ENCODE measurements at regions of chr6 and their contacts with region 1.

Region 1: DNA sequence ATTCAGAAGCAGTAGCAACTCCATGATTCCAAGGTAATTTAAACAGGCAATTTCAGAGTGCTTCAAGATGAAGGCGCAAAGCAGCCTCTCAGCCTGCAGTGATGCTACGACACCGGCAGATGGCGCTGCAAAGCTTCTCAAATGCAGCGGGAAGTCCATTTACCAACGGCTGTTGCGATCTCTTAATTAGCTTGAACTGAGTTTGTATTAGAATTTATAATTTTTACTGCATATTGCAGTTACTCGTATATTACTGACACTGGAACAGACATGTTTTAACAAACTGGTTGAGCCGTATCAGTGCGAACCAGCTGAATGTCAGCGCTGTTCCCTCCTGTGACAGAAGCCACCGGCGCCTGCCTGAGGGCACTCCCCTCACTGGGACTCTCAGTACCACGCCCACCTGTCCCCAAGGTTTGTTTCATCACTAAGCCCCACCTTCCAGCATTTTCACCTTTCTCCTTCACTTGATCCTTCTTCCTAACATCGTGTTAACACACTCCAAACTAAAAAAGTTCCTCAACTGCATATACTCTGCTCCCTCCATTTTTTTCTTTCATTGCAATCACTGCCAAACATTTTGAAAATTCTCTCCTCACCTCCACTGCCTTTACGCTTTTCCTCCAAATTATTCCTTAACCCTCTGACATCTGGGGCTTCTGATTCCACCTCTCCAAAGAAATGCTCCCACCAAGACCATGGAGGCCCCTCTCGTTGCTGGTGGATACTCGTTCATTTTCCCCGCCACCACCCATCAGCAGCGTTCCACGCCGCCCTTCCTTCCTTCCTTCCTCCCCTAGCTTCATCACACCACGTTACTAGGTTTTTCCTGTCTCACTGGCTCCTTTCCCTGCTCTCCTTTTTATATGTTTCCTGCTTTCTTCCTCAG is 14.5 kb downstream of the GNL1 start:
- DNase-seq: peak; percentile 81 to 83 (median 82)
- H3K4me3 ChIP-seq: peak overlapping the region; percentile 39 to 60
- H3K4me3 Mint-ChIP-seq: peak overlapping the region; percentile 84 to 94 (median 90)
- H3K27ac ChIP-seq: peak overlapping the region; percentile 46
- H3K27ac Mint-ChIP-seq: peak overlapping the region; percentile 79 to 99 (median 95)
- H3K4me1 ChIP-seq: peaks cover 37% of the 10 kb centered on the region
- H3K4me1 Mint-ChIP-seq: peaks cover 31 to 44% (median 31%) of the 10 kb centered on the region in 4 donors
- H3K27me3 ChIP-seq: no peaks in the 10 kb centered on the region
- H3K27me3 Mint-ChIP-seq: no peaks in the 10 kb centered on the region

Region 2: DNA sequence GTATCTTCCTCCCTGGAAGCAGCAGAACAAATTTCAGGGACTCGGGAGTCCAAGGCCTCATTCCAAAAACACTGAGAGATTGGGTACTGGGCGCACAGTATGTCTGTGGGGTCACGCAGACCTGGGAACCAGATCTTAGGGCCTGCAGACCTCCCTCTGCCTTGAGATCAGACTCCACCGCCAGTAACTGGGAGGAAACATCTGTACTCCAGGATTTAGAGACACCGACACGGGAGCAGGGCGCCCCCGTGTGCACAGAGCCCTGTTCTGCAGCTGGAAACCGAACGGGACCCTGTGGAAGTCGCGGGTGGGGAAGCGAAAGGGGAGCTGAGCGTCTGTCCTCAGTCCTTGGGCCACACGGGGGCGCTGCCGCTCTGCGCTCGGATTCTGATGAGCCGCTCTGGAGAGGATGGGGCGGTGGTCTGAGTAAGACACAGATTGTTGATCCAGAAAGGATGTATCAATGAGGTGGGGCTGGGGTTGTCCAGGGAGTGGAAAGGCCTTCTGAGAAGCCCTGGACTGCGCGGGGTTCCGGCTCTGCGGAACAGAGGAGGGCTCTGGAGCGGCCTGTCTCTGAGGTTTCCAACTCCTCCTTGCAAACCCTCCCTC is 88.1 kb before region 1 on chr6:
- CTCF ChIA-PET with region 1: interaction called, 20 read pairs
- POLR2A ChIA-PET with region 1: interaction called, 6 read pairs
- intact Hi-C with region 1: no loop called
- DNase-seq: peak; percentile 77 to 84 (median 81)
- H3K4me3 ChIP-seq: peak overlapping the region in 1 of 2 donors; percentile 28
- H3K4me3 Mint-ChIP-seq: peak overlapping the region; percentile 52 to 77 (median 62)
- H3K27ac ChIP-seq: no peak overlapping the region
- H3K27ac Mint-ChIP-seq: peak overlapping the region in 1 of 7 donors; percentile 17
- H3K4me1 ChIP-seq: peaks cover 47% of the 10 kb centered on the region
- H3K4me1 Mint-ChIP-seq: peaks cover 31 to 54% (median 43%) of the 10 kb centered on the region in 4 donors
- H3K27me3 ChIP-seq: peaks cover 80% of the 10 kb centered on the region
- H3K27me3 Mint-ChIP-seq: peaks cover 50 to 56% of the 10 kb centered on the region in 2 donors

Region 3: GRCh38 chr6:30489081-30490025 is 52.4 kb before region 1 on chr6 and contains the start of gene HLA-E:
- CTCF ChIA-PET with region 1: interaction called, 416 read pairs
- POLR2A ChIA-PET with region 1: interaction called, 255 read pairs
- intact Hi-C with region 1: no loop called
- DNase-seq: peak; percentile 92 to 98 (median 96)
- H3K4me3 ChIP-seq: peak within 1 kb of the TSS; percentile 98 to 99
- H3K4me3 Mint-ChIP-seq: peak within 1 kb of the TSS; percentile 98 to 99 (median 99)
- H3K27ac ChIP-seq: peak within 1 kb of the TSS; percentile 95
- H3K27ac Mint-ChIP-seq: peak within 1 kb of the TSS; percentile 97 to 99 (median 99)
- H3K4me1 ChIP-seq: peaks cover 30% of the 10 kb centered on the region
- H3K4me1 Mint-ChIP-seq: peaks cover 28 to 60% (median 44%) of the 10 kb centered on the region in 4 donors
- H3K27me3 ChIP-seq: no peaks in the 10 kb centered on the region
- H3K27me3 Mint-ChIP-seq: no peaks in the 10 kb centered on the region
- total RNA-seq, gene HLA-E: 1,097 to 1,122 TPM

Region 4: DNA sequence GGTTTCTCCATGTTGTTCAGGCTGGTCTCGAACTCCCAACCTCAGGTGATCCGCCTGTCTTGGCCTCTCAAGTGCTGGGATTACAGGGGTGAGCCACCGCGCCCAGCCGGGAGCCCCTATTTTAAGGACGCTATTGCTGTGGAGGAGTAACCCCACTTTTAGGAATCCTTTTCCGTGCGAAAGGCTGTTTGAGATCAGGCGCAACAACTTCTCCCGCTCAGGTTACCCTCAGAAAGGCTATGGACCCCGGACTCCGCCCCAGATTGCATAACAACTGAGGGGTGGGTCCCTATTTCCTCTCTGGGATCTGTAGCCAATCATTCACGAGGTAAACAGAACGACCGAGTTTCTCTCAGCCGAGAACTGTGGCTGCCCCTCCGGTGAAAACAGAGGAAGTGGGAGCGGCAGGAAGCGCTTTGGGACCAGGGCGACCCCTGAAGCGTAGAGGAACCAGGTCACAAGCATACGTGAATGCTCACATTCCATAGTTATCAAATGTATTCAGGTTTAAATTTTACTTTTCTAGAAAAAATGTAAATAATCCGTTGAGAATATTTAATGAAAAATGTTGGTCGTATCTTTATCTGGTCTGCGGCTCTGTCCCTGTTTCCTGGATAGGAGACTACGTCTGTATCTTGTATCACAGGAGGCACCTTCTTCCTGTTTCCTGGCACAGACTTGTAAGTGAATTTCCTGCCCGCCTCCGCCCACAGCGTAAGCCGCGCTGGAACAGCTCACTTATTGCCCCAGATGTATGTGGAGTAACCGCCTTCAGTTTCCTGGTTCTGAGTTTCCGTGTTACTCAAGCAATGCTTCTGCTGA is 25.6 kb before region 1 on chr6:
- CTCF ChIA-PET with region 1: interaction called, 31 read pairs
- POLR2A ChIA-PET with region 1: interaction called, 52 read pairs
- intact Hi-C with region 1: no loop called
- DNase-seq: peak; percentile 91 to 98 (median 96)
- H3K4me3 ChIP-seq: peak overlapping the region; percentile 42 to 64
- H3K4me3 Mint-ChIP-seq: peak overlapping the region; percentile 85 to 92 (median 88)
- H3K27ac ChIP-seq: peak overlapping the region; percentile 91
- H3K27ac Mint-ChIP-seq: peak overlapping the region; percentile 95 to 99 (median 99)
- H3K4me1 ChIP-seq: peaks cover 66% of the 10 kb centered on the region
- H3K4me1 Mint-ChIP-seq: peaks cover 28 to 78% (median 49%) of the 10 kb centered on the region in 4 donors
- H3K27me3 ChIP-seq: no peaks in the 10 kb centered on the region
- H3K27me3 Mint-ChIP-seq: no peaks in the 10 kb centered on the region

Region 5: GRCh38 chr6:30571075-30571768 is 29.5 kb after region 1 on chr6 and contains the start of gene ABCF1:
- CTCF ChIA-PET with region 1: interaction called, 31 read pairs
- POLR2A ChIA-PET with region 1: interaction called, 50 read pairs
- intact Hi-C with region 1: loop called (anchors 1 kb)
- DNase-seq: peak; percentile 98 to 100 (median 99)
- H3K4me3 ChIP-seq: peak within 1 kb of the TSS; percentile 88 to 94
- H3K4me3 Mint-ChIP-seq: peak within 1 kb of the TSS; percentile 97 to 100 (median 100)
- H3K27ac ChIP-seq: peak within 1 kb of the TSS; percentile 95
- H3K27ac Mint-ChIP-seq: peak within 1 kb of the TSS; percentile 97 to 100 (median 99)
- H3K4me1 ChIP-seq: peaks cover 45% of the 10 kb centered on the region
- H3K4me1 Mint-ChIP-seq: peaks cover 48 to 65% (median 54%) of the 10 kb centered on the region in 4 donors
- H3K27me3 ChIP-seq: no peaks in the 10 kb centered on the region
- H3K27me3 Mint-ChIP-seq: no peaks in the 10 kb centered on the region
- total RNA-seq, gene ABCF1: 60.8 to 66.8 TPM

Region 6: DNA sequence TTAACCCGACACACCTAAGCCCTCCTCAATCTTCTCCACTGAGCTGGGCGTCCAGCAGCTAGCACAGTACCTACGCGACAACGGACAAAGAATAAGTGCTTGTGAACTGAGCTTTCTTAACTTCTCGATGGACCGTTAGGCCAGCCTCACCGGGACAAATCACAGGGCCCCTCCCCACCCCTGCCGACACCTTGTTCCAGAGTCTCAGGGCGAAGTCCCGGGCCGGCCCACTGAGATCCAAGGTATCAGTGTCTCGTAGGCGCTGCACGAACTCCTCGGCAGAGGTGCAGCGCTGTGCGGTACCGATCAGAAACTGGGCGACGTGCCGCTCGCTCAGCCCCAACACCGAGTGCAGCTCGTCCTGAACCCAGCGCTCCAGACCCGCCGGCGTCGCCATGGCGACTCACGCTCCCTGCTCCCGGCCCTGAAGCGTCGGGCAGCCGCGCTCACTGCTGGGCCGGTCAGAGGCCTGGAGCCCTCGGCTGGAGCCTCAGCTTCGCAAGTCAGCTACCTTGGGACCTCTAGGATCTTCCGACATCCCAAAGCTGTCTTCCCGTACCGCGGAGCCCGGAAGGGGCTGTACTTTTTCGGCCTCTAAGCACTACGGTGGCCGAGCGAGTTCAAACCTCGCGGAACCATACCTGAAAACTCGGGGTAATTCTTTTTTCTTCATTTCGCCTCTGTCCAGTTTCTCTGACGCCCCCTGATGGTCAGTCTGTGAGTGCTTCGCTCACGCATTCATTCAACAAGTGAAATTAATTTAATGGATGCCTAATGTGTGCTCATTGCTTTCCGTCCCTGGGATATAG is 130.9 kb after region 1 on chr6 and contains the start of gene DHX16:
- CTCF ChIA-PET with region 1: interaction called, 13 read pairs
- POLR2A ChIA-PET with region 1: interaction called, 6 read pairs
- intact Hi-C with region 1: loop called (anchors 1 kb)
- DNase-seq: peak; percentile 84 to 89 (median 87)
- H3K4me3 ChIP-seq: peak within 1 kb of the TSS; percentile 89 to 95
- H3K4me3 Mint-ChIP-seq: peak within 1 kb of the TSS; percentile 80 to 94 (median 90)
- H3K27ac ChIP-seq: peak within 1 kb of the TSS; percentile 77
- H3K27ac Mint-ChIP-seq: peak within 1 kb of the TSS; percentile 69 to 97 (median 94)
- H3K4me1 ChIP-seq: peaks cover 20% of the 10 kb centered on the region
- H3K4me1 Mint-ChIP-seq: peaks cover 19 to 51% (median 35%) of the 10 kb centered on the region in 4 donors
- H3K27me3 ChIP-seq: no peaks in the 10 kb centered on the region
- H3K27me3 Mint-ChIP-seq: no peaks in the 10 kb centered on the region
- total RNA-seq, gene DHX16: 53.4 to 54.6 TPM

Region 7: DNA sequence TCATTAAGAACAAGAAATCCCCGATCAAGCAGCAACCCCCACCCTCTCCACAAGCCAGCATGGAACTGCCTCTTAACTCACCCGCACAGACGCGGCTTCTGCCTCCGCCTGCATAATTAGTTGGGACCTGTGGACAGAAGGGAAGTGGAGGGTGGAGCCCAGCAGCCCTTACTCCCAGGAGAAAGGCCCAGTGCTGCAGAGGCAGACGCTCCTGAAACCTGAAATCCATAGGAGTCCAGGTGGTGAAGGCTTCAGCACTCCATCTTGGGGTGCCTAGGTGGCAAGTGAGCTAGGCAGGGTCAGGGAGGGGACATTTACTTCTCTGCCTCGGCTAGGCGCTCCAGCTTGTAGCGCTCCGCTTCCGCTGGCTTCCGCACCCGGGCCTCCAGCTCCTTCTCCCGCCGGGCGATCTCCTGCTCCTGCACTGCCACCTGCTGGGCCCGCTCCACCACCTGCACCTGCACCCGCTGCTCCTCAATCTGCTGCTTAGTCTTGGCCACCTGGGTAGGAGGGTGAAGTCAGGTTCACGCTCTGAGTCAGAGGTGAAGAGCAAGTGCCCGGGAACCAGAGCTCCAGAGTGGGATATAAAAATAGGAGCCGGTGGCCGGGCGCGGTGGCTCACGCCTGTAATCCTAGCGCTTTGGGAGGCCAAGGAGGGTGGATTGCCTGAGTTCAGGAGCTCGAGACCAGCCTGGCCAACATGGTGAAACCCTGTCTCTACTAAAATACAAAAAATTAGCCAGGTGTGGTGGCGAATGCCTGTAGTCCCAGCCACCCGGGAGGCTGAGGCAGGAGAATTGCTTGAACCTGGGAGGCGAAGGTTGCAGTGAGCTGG is 189.1 kb after region 1 on chr6:
- CTCF ChIA-PET with region 1: interaction called, 136 read pairs
- POLR2A ChIA-PET with region 1: interaction called, 18 read pairs
- intact Hi-C with region 1: loop called (anchors 2 kb)
- DNase-seq: peak; percentile 81 to 86 (median 82)
- H3K4me3 ChIP-seq: peak overlapping the region in 1 of 2 donors; percentile 35
- H3K4me3 Mint-ChIP-seq: peak overlapping the region in 6 of 8 donors; percentile 43 to 72 (median 58)
- H3K27ac ChIP-seq: no peak overlapping the region
- H3K27ac Mint-ChIP-seq: peak overlapping the region in 5 of 7 donors; percentile 69 to 84 (median 73)
- H3K4me1 ChIP-seq: peaks cover 23% of the 10 kb centered on the region
- H3K4me1 Mint-ChIP-seq: peaks cover 16 to 40% (median 31%) of the 10 kb centered on the region in 4 donors
- H3K27me3 ChIP-seq: no peaks in the 10 kb centered on the region
- H3K27me3 Mint-ChIP-seq: no peaks in the 10 kb centered on the region

Region 8: GRCh38 chr6:30836431-30836866 is 294.7 kb after region 1 on chr6:
- CTCF ChIA-PET with region 1: no interaction called
- POLR2A ChIA-PET with region 1: no interaction called
- intact Hi-C with region 1: no loop called
- DNase-seq: no peak
- H3K4me3 ChIP-seq: no peak overlapping the region
- H3K4me3 Mint-ChIP-seq: no peak overlapping the region
- H3K27ac ChIP-seq: no peak overlapping the region
- H3K27ac Mint-ChIP-seq: peak overlapping the region in 1 of 7 donors; percentile 80
- H3K4me1 ChIP-seq: peaks cover 31% of the 10 kb centered on the region
- H3K4me1 Mint-ChIP-seq: peaks cover 25 to 42% (median 30%) of the 10 kb centered on the region in 4 donors
- H3K27me3 ChIP-seq: no peaks in the 10 kb centered on the region
- H3K27me3 Mint-ChIP-seq: no peaks in the 10 kb centered on the region

Measured in CD4-positive, alpha-beta memory T cell (primary cell).